OCI-LY7 (cell line): ENCODE measurements at regions of chr19 and their contacts with region 1.

Region 1: DNA sequence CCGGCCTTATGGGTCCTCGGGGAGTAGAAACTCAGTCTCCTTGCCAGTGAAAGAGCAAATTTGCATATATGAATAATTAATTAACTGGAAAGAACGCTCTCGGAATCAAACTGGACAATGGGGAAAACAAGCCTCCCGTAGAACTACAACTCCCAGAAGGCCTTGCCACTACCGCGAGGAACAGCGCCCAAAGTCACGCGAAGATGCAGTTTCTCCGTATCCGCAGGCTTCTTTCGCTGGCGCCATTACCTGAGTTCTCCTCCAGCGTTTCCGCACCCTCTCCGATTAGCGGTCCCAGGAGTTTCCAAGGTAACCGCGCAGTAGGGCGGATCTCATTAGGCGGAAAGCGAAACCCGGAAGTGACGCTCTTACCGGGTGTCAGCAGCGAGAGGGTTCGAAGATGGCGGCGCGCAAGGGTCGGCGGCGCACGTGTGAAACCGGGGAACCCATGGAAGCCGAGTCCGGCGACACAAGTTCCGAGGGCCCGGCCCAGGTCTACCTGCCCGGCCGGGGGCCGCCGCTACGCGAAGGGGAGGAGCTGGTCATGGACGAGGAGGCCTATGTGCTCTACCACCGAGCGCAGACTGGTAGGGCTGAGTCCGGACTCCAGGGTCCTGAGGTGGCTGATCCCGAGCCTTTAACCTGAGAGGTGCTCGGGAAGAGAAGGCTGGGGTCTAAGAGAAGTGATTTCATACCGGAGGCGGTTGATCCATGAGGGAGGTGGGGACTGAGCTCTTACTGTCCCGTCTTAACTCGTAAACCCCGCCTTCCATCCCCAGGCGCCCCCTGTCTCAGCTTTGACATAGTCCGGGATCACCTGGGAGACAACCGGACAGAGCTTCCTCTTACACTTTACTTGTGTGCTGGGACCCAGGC is at the start of gene GRWD1:
- DNase-seq: peak; percentile 95
- H3K4me3 ChIP-seq: peak within 1 kb of the TSS; percentile 97
- H3K27ac ChIP-seq: peak within 1 kb of the TSS; percentile 70
- H3K4me1 ChIP-seq: peaks cover 26% of the 10 kb centered on the region
- CTCF ChIP-seq: peak; percentile 50
- total RNA-seq, gene GRWD1: 34.4 and 35.8 TPM in 2 replicates

Region 2: GRCh38 chr19:48391107-48391986 is 54.5 kb before region 1 on chr19 and contains the start of gene KDELR1:
- CTCF ChIA-PET with region 1: no interaction called
- POLR2A ChIA-PET with region 1: no interaction called
- intact Hi-C with region 1: loop called (anchors 5 kb)
- DNase-seq: peak; percentile 72
- H3K4me3 ChIP-seq: peak within 1 kb of the TSS; percentile 88
- H3K27ac ChIP-seq: peak within 1 kb of the TSS; percentile 56
- H3K4me1 ChIP-seq: peaks cover 15% of the 10 kb centered on the region
- CTCF ChIP-seq: peak; percentile 96
- total RNA-seq, gene KDELR1: 26.2 and 38.8 TPM in 2 replicates

Region 3: DNA sequence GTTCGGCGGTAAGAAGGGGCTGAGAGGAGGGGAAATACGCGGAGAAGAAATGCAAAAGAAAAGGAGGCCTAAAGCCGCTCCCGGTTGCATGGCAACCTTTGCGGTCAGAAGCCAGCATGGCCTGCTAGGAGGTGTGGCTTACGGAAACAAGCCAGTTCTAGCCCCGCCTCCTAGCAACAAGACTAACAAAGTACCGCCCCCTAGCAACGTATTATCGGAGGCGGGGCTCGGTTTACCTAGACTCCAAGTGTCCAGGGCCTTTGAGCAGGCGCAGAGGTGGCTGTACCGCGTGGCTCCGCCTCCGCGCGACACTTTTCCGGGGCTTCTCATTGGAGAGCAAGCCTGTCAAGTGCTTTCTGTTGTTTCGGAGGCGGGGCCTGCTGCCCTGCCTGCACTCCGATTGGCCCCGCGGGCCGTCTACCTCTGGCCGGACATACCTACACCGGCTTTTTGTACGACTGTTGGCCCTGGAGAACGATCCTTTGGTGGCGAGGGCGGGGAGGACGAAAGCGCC is 23.0 kb after region 1 on chr19:
- CTCF ChIA-PET with region 1: no interaction called
- POLR2A ChIA-PET with region 1: no interaction called
- intact Hi-C with region 1: loop called (anchors 1 kb)
- DNase-seq: peak; percentile 100
- H3K4me3 ChIP-seq: peak overlapping the region; percentile 80
- H3K27ac ChIP-seq: peak overlapping the region; percentile 83
- H3K4me1 ChIP-seq: peaks cover 13% of the 10 kb centered on the region
- CTCF ChIP-seq: no peak

Region 4: DNA sequence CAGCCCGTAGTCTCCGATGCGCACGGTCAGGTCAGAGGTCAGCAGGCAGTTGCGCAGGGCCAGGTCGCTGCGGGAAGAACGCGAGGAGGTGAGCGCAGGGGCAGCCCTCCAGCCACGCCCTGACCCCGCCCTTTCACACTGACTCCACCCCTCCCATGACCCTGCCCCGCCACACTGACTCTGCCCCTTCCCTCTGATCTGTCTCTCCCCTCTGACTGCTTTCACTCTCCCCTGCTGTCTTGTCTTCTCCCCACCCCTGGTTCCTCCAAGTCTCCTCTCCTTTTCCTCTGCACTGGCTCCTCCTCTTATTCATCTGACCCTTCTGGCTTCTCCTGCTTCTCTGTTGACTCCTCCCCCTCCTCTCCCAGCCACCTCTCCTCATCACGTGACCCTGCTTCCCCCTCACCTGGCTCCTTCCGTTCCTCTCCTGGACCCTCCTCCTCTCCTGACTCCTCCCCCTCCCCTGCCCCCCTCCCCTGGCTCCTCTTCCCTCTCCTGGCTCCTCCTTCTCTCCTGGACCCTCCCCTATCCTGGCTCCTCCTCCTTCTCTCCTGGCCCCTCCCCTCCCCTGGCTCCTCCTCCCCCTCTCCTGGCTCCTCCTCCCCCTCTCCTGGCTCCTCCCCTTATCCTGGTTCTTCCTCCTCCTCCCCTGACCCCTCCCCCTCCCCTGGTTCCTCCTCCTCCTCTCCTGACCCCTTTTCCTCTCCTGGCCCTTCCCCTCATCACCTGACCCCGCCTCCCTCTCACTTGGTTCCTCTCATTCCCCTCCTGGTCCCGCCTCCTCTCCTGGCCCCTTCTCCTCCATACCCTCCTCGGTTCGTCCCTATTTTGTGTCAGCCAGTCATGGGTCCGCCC is 55.9 kb after region 1 on chr19:
- CTCF ChIA-PET with region 1: no interaction called
- POLR2A ChIA-PET with region 1: no interaction called
- intact Hi-C with region 1: loop called (anchors 2 kb)
- DNase-seq: peak; percentile 94
- H3K4me3 ChIP-seq: peak overlapping the region; percentile 58
- H3K27ac ChIP-seq: peak overlapping the region; percentile 36
- H3K4me1 ChIP-seq: peaks cover 20% of the 10 kb centered on the region
- CTCF ChIP-seq: no peak

Region 5: GRCh38 chr19:48746738-48747575 is 301.1 kb after region 1 on chr19 and contains the start of gene IZUMO1:
- CTCF ChIA-PET with region 1: no interaction called
- POLR2A ChIA-PET with region 1: no interaction called
- intact Hi-C with region 1: no loop called
- DNase-seq: peak; percentile 77
- H3K4me3 ChIP-seq: peak within 1 kb of the TSS; percentile 58
- H3K27ac ChIP-seq: no peak within 1 kb of the TSS
- H3K4me1 ChIP-seq: peaks cover 5% of the 10 kb centered on the region
- CTCF ChIP-seq: no peak
- total RNA-seq, gene IZUMO1: not detected in 2 replicates